Gastrocnemius medialis (tissue), 4 donors: ENCODE measurements at regions of chr2 and their contacts with region 1.

Region 1: GRCh38 chr2:171160119-171160955 is at the start of gene TLK1:
- DNase-seq: peak; percentile 50 to 72
- ATAC-seq: peak; percentile 79 to 81
- H3K4me3 ChIP-seq: peak within 1 kb of the TSS; percentile 89 to 97 (median 96)
- H3K27ac ChIP-seq: peak within 1 kb of the TSS; percentile 98 to 99 (median 98)
- H3K4me1 ChIP-seq: peaks cover 23 to 28% of the 10 kb centered on the region in 2 donors
- H3K27me3 ChIP-seq: no peaks in the 10 kb centered on the region
- CTCF ChIP-seq: peak in 2 of 5 experiments; percentile 8 to 18
- POLR2A ChIP-seq: peak; percentile 85 to 90
- total RNA-seq, gene TLK1: 7.7 to 14.2 (median 10.0) TPM

Region 2: DNA sequence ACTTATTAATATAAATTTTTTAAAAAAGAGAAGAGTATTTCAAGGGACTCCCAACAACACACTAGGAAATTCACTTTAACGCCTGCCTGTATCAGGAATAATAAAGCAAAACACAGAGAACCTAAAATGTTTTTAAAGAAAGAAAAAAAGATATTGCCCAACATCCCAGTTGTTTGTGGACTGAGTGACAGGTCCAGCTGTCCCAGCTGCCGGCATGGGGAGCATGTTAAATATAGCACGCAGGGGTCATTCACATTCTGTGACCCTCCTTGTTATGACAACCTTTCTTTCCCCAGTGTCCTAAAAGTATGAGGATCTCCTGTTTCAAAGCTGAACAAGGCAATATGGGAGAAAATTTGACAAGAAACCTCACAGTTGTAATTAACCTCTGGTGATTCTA is 1646.4 kb before region 1 on chr2:
- in situ Hi-C with region 1: no loop called
- intact Hi-C with region 1: loop called (anchors 5 kb)
- DNase-seq: peak; percentile 78 to 90
- ATAC-seq: peak; percentile 65 to 70
- H3K4me3 ChIP-seq: peak overlapping the region; percentile 71 to 74 (median 72)
- H3K27ac ChIP-seq: peak overlapping the region; percentile 90 to 95 (median 92)
- H3K4me1 ChIP-seq: peaks cover 29 to 31% of the 10 kb centered on the region in 2 donors
- H3K27me3 ChIP-seq: no peaks in the 10 kb centered on the region
- CTCF ChIP-seq: no peak
- POLR2A ChIP-seq: peak in 1 of 2 donors; percentile 63

Region 3: GRCh38 chr2:170973492-170974303 is 186.6 kb before region 1 on chr2:
- in situ Hi-C with region 1: loop called in 3 of 4 experiments (anchors 25 kb)
- intact Hi-C with region 1: loop called (anchors 1 kb)
- DNase-seq: peak; percentile 61 to 72
- ATAC-seq: peak; percentile 93
- H3K4me3 ChIP-seq: peak overlapping the region; percentile 65 to 78 (median 74)
- H3K27ac ChIP-seq: peak overlapping the region; percentile 56 to 73 (median 64)
- H3K4me1 ChIP-seq: peaks cover 4 to 5% of the 10 kb centered on the region in 2 donors
- H3K27me3 ChIP-seq: no peaks in the 10 kb centered on the region
- CTCF ChIP-seq: peak; percentile 82 to 98 (median 97)
- POLR2A ChIP-seq: peak; percentile 11 to 13

Region 4: DNA sequence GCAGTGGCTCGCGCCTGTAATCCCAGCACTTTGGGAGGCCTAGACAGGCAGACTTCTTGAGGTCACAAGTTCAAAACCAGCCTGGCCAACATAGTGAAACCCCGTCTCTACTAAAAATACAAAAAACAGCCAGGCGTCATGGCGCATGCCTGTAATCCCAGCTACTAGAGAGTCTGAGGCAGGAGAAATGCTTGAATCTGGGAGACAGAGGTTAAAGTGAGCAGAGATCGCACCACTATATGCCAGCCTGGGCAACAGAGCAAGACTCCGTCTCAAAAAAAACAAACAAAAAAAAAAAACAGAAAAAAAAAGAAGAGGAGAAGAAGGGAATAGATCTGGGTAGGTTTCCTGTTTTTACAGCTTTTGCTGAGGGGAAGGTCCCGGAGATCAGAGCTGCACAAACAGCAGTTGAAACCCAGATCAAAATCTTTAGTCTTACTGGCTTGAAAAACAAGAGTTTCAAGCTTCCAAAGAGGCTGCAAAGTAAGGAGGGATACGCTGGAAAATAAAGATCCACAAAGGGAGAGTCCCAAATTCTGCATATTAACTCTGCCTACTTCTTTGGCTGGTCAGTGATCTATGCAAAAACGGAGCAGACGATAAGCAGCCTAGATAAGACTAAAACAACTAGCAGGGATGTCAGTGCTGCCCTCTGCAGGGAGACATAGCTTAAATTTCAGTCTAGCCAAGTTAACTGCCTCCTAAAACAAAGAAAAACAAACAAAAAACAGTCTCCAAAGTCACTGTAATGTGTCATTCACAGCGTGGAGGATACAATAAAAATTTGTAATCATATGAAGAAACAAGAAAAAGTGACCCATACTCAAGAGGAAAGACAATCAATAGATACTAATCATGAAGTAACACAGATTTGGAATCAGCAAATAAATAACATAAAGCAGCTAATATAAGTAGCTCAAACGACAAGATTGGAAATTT is 73.7 kb before region 1 on chr2:
- in situ Hi-C with region 1: no loop called
- intact Hi-C with region 1: loop called (anchors 5 kb)
- DNase-seq: no peak
- ATAC-seq: peak in 1 of 2 donors; percentile 44
- H3K4me3 ChIP-seq: no peak overlapping the region
- H3K27ac ChIP-seq: no peak overlapping the region
- H3K4me1 ChIP-seq: peaks cover 5 to 16% of the 10 kb centered on the region in 2 donors
- H3K27me3 ChIP-seq: no peaks in the 10 kb centered on the region
- CTCF ChIP-seq: peak in 2 of 5 experiments; percentile 19 to 42
- POLR2A ChIP-seq: no peak

Region 5: DNA sequence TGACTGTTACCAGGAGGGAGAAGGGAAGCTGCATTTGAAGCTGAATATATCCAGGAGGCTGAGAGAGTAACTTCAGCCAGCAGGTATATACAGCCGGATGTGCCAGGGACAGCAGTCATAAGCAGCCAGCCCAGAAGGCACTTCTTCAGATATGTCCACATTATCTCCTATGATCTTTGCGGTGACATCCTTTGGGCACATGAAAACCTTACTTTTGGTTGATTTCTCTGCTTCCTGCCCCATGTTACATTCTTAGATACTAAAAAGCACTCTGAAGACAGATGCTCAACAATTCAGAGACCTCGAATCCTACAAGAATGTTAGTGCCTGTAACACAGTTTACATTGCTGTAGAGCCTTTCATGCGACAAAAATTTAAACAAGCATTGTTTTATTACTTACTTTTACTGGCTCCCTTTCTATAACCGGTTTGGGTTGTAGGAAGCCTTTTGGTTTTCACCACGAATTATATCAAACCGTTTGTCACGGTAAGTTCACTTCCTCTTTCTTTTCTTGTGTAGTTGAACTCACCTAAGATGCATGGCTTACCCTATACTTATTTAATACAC is 50.6 kb after region 1 on chr2:
- in situ Hi-C with region 1: no loop called
- intact Hi-C with region 1: no loop called
- DNase-seq: no peak
- ATAC-seq: no peak
- H3K4me3 ChIP-seq: no peak overlapping the region
- H3K27ac ChIP-seq: no peak overlapping the region
- H3K4me1 ChIP-seq: no peaks in the 10 kb centered on the region
- H3K27me3 ChIP-seq: no peaks in the 10 kb centered on the region
- CTCF ChIP-seq: no peak
- POLR2A ChIP-seq: no peak

Region 6: DNA sequence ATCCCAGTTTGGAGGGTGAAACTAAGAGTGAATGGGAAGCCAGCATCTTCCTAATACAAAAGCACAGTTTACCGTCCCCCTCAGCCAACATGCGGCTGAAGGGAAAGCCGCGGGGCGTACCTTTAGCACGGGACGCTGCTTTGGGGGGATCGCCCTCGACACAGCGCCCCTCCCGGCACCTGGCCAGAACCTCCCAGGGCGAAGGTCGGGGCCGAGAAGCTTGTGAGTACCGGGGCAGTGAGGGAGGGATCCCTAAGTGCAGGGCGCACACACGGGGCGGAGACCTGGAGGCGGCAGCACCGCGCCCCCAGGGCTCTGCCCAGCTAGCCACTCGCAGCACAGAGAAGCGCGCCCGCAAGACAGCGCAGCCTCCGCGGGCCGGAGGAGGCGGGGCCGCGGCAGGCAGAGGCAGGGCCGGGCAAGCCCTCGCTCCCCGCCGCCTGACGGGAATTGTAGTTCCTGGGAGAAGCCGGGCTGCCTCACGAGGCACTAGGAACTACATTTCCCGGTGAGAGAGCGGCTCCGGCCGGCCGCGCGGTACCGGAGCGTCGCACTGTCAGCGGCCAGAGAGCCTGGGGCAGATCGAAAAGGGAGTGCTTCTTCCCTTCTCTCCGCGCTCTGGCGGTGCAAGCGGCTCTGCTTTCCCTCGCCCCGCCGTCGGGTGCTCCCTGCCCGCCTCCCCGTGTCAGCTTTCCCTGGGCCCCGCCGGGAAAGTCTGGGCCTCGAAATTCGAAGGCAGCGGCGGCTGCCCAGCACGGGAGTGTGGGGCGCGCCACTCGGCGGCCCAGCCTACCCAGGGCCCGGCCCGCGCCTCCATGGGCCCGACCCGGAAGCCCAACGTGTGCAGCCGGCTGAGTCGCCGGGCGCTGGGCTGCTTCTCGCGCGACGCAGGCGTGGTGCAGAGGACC is 273.7 kb after region 1 on chr2 and contains the starts of genes DCAF17 and METTL8:
- in situ Hi-C with region 1: no loop called
- intact Hi-C with region 1: loop called (anchors 5 kb)
- DNase-seq: peak; percentile 94
- ATAC-seq: peak; percentile 96 to 97
- H3K4me3 ChIP-seq: peak within 1 kb of the TSS; percentile 75 to 96 (median 83)
- H3K27ac ChIP-seq: peak within 1 kb of the TSS; percentile 90 to 99 (median 98)
- H3K4me1 ChIP-seq: peaks cover 12 to 21% of the 10 kb centered on the region in 2 donors
- H3K27me3 ChIP-seq: no peaks in the 10 kb centered on the region
- CTCF ChIP-seq: peak in 3 of 5 experiments; percentile 23 to 43 (median 39)
- POLR2A ChIP-seq: peak; percentile 75 to 77
- total RNA-seq, gene DCAF17: 5.2 to 22.8 (median 8.9) TPM
- total RNA-seq, gene METTL8: 10.3 to 22.0 (median 11.0) TPM